ENCODE measurements at regions of chr3 and their contacts with region 1.

Region 1: GRCh38 chr3:169863458-169863899 is 6.3 kb downstream of the LRRC31 start:
- DNase-seq: peak; percentile 49
- ATAC-seq: peak; percentile 50
- H3K4me3 Mint-ChIP-seq: peak overlapping the region; percentile 19
- H3K27ac Mint-ChIP-seq: peak overlapping the region; percentile 35
- H3K4me1 Mint-ChIP-seq: peaks cover 30% of the 10 kb centered on the region
- H3K27me3 Mint-ChIP-seq: no peaks in the 10 kb centered on the region
- CTCF ChIP-seq: peak; percentile 94

Region 2: GRCh38 chr3:169165196-169166158 is 698.0 kb before region 1 on chr3:
- CTCF ChIA-PET with region 1: no interaction called
- POLR2A ChIA-PET with region 1: no interaction called
- intact Hi-C with region 1: no loop called
- DNase-seq: no peak
- ATAC-seq: no peak
- H3K4me3 Mint-ChIP-seq: no peak overlapping the region
- H3K27ac Mint-ChIP-seq: no peak overlapping the region
- H3K4me1 Mint-ChIP-seq: no peaks in the 10 kb centered on the region
- H3K27me3 Mint-ChIP-seq: peaks cover 3% of the 10 kb centered on the region
- CTCF ChIP-seq: no peak

Region 3: DNA sequence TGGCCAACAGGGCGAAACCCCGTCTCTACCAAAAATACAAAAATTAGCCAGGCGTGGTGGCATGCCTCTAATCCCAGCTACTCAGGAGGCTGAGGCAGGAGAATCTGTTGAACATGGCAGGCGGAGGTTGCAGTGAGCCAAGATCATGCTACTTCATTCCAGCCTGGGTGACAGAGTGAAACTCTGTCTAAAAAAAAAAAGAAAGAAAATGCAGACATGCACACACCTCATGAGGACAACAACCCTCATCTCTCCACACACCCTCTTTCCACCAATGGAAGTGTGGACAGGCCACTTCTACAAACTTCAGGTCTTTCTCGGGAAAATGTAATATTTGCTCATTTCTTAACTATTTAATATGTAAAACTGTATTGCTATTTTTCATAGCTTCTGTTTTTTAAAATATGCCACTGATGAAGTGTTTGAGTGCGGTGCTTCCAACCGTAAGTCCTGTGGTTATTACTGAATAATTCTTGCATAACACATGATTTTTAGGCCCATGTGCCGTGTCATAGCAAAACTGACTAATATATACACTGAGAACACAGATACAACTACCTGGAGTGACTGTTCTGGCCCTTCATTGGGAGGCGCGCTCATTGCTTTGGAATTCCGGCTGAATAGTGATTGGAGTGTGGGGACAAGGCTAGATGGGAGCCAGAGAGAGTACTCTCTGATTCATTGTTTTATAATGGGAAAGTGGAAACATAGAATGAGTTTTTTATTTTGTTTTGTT is 16.9 kb before region 1 on chr3:
- CTCF ChIA-PET with region 1: interaction called, 3 read pairs
- POLR2A ChIA-PET with region 1: interaction called, 9 read pairs
- intact Hi-C with region 1: loop called (anchors 1 kb)
- DNase-seq: no peak
- ATAC-seq: peak; percentile 95
- H3K4me3 Mint-ChIP-seq: peak overlapping the region; percentile 67
- H3K27ac Mint-ChIP-seq: peak overlapping the region; percentile 92
- H3K4me1 Mint-ChIP-seq: peaks cover 57% of the 10 kb centered on the region
- H3K27me3 Mint-ChIP-seq: no peaks in the 10 kb centered on the region
- CTCF ChIP-seq: no peak

Region 4: GRCh38 chr3:169945313-169945712 is 81.8 kb after region 1 on chr3:
- CTCF ChIA-PET with region 1: interaction called, 4 read pairs
- POLR2A ChIA-PET with region 1: interaction called, 6 read pairs
- intact Hi-C with region 1: loop called (anchors 2 kb)
- DNase-seq: peak; percentile 54
- ATAC-seq: peak; percentile 91
- H3K4me3 Mint-ChIP-seq: peak overlapping the region; percentile 68
- H3K27ac Mint-ChIP-seq: peak overlapping the region; percentile 93
- H3K4me1 Mint-ChIP-seq: peaks cover 93% of the 10 kb centered on the region
- H3K27me3 Mint-ChIP-seq: no peaks in the 10 kb centered on the region
- CTCF ChIP-seq: no peak

Region 5: GRCh38 chr3:170021083-170021482 is 157.6 kb after region 1 on chr3:
- CTCF ChIA-PET with region 1: interaction called, 9 read pairs
- POLR2A ChIA-PET with region 1: interaction called, 3 read pairs
- intact Hi-C with region 1: loop called (anchors 1 kb)
- DNase-seq: no peak
- ATAC-seq: peak; percentile 70
- H3K4me3 Mint-ChIP-seq: no peak overlapping the region
- H3K27ac Mint-ChIP-seq: no peak overlapping the region
- H3K4me1 Mint-ChIP-seq: peaks cover 5% of the 10 kb centered on the region
- H3K27me3 Mint-ChIP-seq: peaks cover 4% of the 10 kb centered on the region
- CTCF ChIP-seq: no peak

Region 6: DNA sequence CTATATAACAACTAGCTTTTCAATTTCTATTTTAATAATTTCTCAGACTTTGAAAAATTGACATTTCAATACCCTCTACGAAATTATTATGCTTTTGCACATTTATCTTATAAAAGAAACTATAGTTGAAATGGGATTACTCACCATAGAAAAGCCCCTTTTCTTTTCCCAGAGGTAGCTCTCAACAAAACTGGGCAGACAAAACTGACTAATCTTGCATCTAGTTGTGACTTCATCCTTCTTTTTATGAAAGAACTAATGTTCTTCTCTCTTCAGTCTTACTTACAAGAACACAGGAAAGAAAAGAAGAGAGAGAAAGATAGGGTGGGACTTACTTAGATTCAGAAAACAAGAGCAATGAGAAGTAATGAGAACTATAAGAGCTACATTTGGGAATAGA is 235.3 kb after region 1 on chr3:
- CTCF ChIA-PET with region 1: no interaction called
- POLR2A ChIA-PET with region 1: no interaction called
- intact Hi-C with region 1: loop called (anchors 5 kb)
- DNase-seq: no peak
- ATAC-seq: no peak
- H3K4me3 Mint-ChIP-seq: no peak overlapping the region
- H3K27ac Mint-ChIP-seq: peak overlapping the region; percentile 43
- H3K4me1 Mint-ChIP-seq: peaks cover 9% of the 10 kb centered on the region
- H3K27me3 Mint-ChIP-seq: no peaks in the 10 kb centered on the region
- CTCF ChIP-seq: no peak

Region 7: DNA sequence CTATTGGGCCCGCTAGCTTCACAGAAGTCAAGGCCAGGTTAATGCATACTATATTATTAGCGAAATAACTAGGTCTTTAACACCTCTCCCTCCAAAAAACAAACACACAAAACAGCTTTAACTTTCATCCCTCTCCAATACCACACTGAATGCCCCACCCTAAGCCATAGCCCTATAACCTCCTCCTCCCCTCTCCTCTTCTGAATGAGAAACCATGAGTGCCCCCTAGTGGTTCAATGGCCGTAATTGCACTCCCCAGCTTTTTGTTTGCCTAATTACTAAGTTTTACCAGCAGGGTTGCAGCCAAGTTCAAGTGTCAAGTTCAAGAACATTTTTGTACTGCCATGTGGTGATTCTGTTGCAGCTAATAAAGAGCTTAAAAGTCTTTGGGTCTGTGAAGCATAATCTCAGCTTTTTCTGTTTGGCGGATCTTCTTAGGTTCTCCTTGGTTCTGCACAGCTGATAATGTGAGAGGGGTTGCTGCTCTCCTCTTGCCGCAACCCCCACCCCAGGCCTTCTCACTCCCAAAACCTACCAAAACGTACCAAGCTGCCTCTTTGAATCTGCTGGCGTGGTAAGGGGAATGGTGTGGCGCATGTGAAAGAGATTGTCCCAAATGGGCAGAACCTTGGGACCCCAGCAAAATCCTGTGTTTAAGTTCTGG is 948.6 kb after region 1 on chr3:
- CTCF ChIA-PET with region 1: interaction called, 3 read pairs
- POLR2A ChIA-PET with region 1: no interaction called
- intact Hi-C with region 1: loop called (anchors 5 kb)
- DNase-seq: peak; percentile 30
- ATAC-seq: peak; percentile 97
- H3K4me3 Mint-ChIP-seq: no peak overlapping the region
- H3K27ac Mint-ChIP-seq: no peak overlapping the region
- H3K4me1 Mint-ChIP-seq: no peaks in the 10 kb centered on the region
- H3K27me3 Mint-ChIP-seq: no peaks in the 10 kb centered on the region
- CTCF ChIP-seq: peak; percentile 84

Measured in activated B cell treated with CpG ODN at 0.5 μM for 24 hours (primary cell).